Activated T-helper 2 cell treated with anti-CD3 and anti-CD28 coated beads, Interferon-gamma antibody, Interleukin-2, Interleukin-4, amounts not matched to agents 10 μg/mL and 5 μg/mL and 100 μg/mL, durations not matched to agents 14 hours and 24 hours and 36 hours (primary cell): ENCODE measurements at regions of chr5 and their contacts with region 1.

Region 1: DNA sequence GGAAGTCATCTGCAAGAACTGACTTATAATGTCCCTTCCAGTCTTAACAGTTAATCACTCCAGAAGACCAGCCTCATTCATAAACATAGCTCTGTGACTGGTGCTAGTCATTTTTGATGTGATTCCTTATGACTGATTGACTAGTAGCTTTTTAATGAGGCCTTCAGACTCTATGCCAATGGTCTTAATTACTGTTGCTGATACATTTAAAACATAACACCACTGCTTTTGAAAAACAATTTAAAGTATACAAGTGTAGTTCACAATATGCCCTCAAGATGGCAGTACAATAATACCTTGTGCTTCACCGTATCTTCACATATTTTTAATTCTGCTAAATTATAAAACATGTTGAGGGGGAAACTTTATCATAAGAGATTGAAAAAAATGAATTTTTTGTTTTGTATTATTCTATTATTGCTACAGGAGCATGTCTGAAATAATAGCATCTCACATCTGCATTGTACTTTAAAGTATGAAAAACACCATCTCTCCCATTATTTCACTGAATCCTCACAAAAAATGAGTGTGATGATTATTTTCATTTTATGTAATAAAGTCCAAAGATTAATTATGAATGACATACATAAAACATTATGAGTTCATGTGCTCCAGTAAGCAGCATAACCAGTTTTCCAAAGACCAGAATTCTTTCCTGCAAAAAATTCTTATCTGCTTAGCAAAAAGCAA is 55.2 kb upstream of the SHISAL2B start:
- DNase-seq: no peak
- H3K4me3 Mint-ChIP-seq: no peak overlapping the region
- H3K27ac Mint-ChIP-seq: no peak overlapping the region
- H3K4me1 Mint-ChIP-seq: peaks cover 5% of the 10 kb centered on the region
- H3K27me3 Mint-ChIP-seq: peaks cover 23% of the 10 kb centered on the region

Region 2: DNA sequence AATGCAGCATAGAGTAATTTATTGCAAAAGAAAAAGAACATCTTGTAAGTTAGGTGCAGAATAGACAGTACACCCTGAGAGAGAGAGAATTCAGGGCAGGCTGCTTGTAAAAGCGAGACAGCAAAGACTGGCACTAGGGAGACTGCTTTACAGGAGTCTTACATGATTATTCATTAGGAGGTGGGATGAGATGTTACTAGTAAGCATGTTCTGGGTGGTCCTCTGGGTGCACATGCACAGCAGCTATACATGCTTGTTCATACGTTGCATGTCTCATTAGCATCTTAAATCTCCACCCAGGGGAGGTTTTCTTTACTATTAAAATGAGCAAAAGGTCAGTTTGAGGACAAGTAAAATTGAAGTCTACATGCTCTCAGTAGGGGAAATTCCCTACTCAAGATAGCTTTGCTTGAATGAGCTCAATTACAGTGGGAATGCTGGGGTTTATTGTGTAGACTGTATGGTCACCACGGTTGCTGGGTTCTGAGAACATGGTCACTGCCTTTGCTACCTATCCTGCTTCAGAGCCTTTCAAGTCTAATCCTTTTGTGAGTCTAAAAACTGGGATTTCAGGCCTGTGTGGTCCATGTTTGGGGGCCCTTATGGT is 68.7 kb before region 1 on chr5:
- intact Hi-C with region 1: no loop called
- DNase-seq: no peak
- H3K4me3 Mint-ChIP-seq: no peak overlapping the region
- H3K27ac Mint-ChIP-seq: no peak overlapping the region
- H3K4me1 Mint-ChIP-seq: no peaks in the 10 kb centered on the region
- H3K27me3 Mint-ChIP-seq: no peaks in the 10 kb centered on the region

Region 3: DNA sequence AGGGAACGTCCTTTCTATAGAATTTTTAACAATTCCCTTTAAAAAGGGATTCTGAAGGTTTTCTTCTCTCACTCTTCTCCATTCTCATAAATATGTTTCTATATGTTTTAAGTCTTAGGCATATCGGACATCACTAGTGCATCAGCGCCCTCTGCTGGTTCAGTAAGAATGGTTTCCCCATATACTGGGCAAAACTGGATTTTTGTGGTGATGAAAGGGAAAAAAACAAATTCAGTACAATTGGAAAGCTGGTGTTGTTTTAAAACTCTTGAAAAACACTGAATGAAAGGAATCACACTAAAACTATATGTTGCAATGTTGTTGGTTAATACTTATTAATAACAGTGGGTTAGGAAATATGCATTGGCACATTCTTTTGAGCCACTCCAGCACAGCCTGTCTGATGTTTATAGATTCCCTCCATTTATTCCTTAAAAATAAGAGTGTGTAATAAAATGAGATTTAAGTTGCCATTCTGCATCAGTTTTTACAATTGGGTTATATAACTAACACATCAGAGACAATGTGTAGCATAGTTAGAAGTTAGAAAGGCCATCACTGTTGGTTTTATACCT is 149.4 kb after region 1 on chr5:
- intact Hi-C with region 1: loop called (anchors 1 kb)
- DNase-seq: peak; percentile 42
- H3K4me3 Mint-ChIP-seq: no peak overlapping the region
- H3K27ac Mint-ChIP-seq: no peak overlapping the region
- H3K4me1 Mint-ChIP-seq: peaks cover 5% of the 10 kb centered on the region
- H3K27me3 Mint-ChIP-seq: no peaks in the 10 kb centered on the region